Transverse colon (tissue), 4 donors: ENCODE measurements at regions of chr4 and their contacts with region 1.

Region 1: DNA sequence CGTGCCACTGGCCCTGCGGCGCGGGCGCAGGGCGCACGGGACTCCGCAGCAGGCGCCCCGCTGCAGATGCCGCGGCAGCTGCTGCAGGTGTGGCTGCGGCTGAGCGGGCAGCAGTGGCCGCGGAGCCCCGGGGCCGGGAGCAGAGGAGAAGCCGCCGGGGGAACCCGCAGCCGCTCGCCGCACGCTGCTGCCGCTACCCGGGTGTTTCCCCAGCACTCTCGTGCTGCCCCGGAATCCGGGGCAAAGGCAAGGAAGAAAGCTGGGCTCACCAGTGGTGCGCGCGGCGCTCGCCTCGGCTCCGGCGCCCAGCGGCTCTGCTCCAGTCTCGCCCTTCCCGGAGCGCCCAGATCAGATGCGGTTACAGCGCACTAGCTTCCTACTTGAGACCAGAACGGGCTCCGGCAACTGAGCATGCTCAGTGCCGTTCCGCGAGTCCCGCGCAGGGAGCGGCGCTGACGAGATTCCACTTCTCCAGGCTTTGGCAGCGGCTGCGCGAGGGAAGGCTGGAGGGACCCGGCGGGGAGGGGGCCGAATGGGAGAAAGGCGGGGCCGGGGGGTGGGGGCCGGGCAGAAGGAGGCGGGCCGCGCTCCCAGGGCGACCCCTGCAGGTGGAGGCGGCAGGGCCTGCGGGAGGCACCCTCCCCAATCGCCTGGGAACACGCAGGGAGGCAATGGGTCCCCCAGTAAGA is at the start of gene APBB2:
- DNase-seq: peak; percentile 95
- H3K4me3 ChIP-seq: peak within 1 kb of the TSS; percentile 79 to 89 (median 86)
- H3K27ac ChIP-seq: peak within 1 kb of the TSS; percentile 87 to 94 (median 90)
- H3K4me1 ChIP-seq: peaks cover 4 to 51% (median 25%) of the 10 kb centered on the region in 4 donors
- H3K27me3 ChIP-seq: no peaks in the 10 kb centered on the region
- CTCF ChIP-seq: peak; percentile 60 to 87 (median 79)
- EP300 ChIP-seq: no peak
- POLR2A ChIP-seq: peak; percentile 86
- total RNA-seq, gene APBB2: 37.1 to 138 (median 90.1) TPM

Region 2: GRCh38 chr4:40924096-40924792 is 290.0 kb before region 1 on chr4:
- in situ Hi-C with region 1: loop called in 2 of 4 experiments (anchors 10 kb)
- intact Hi-C with region 1: no loop called
- DNase-seq: peak; percentile 63
- H3K4me3 ChIP-seq: no peak overlapping the region
- H3K27ac ChIP-seq: no peak overlapping the region
- H3K4me1 ChIP-seq: peaks cover 0 to 3% (median 0%) of the 10 kb centered on the region in 4 donors
- H3K27me3 ChIP-seq: no peaks in the 10 kb centered on the region
- CTCF ChIP-seq: peak; percentile 69 to 86 (median 83)
- EP300 ChIP-seq: no peak
- POLR2A ChIP-seq: no peak

Region 3: DNA sequence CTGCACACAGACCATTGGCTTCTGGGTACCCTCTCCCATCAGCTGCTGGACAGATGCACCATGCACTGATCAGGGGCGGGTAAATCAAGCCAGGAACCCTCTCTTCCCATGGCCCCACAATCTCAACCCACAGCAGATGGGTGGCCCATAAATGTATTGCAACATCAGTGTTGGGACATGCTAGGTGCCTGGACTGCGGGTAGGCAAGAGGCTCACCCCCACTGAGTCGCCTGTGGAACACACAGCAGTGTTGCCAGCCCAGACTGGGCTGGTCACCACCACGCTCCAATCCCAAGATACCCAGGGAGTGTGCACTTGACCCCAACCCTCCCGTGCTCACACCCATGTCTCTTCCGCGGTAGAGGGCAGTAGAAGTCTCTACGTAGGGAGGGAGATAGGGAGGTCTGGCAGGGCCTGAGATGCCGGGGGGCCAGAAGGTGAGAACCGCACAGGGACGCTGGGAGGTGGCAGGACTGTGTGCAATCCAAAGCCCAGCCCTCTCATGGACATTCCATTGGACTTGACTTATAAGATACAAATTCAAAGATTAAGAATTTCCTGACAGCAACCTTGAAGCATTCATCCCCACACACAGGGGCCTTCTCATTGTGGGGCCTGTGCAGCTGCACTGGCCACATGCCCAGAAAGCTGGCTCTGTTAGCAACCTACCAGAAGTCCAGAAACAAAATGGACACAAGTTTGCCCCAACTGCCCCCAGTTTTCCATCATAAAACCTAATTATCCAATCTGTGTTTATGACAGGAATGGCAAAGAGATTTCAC is 280.8 kb before region 1 on chr4:
- in situ Hi-C with region 1: loop called in 3 of 4 experiments (anchors 5 to 10 kb)
- intact Hi-C with region 1: loop called (anchors 2 kb)
- DNase-seq: no peak
- H3K4me3 ChIP-seq: no peak overlapping the region
- H3K27ac ChIP-seq: no peak overlapping the region
- H3K4me1 ChIP-seq: no peaks in the 10 kb centered on the region
- H3K27me3 ChIP-seq: no peaks in the 10 kb centered on the region
- CTCF ChIP-seq: no peak
- EP300 ChIP-seq: no peak
- POLR2A ChIP-seq: no peak

Region 4: DNA sequence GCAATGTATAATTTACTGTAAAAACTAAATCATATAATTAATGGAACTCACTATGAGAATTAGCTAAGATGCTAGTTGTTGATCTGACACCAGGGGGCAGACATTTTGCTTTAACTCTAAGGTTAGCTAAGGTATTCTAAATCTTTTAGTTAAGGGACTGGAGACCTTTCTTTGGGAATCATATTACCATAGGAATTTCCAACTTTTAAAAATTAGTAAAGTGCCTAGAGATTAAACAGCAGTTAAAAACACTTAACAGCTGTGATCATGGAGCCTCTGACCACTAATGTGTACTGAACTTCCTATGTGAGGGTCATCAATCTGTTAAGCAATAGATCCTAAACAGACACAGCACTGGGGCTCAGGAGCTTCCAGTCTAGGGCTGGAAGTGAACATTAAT is 237.9 kb before region 1 on chr4:
- in situ Hi-C with region 1: loop called (anchors 5 to 25 kb)
- intact Hi-C with region 1: loop called (anchors 2 kb)
- DNase-seq: peak; percentile 25
- H3K4me3 ChIP-seq: no peak overlapping the region
- H3K27ac ChIP-seq: no peak overlapping the region
- H3K4me1 ChIP-seq: no peaks in the 10 kb centered on the region
- H3K27me3 ChIP-seq: no peaks in the 10 kb centered on the region
- CTCF ChIP-seq: peak; percentile 63 to 76 (median 71)
- EP300 ChIP-seq: no peak
- POLR2A ChIP-seq: no peak

Region 5: GRCh38 chr4:41060352-41061334 is 153.6 kb before region 1 on chr4:
- in situ Hi-C with region 1: no loop called
- intact Hi-C with region 1: loop called (anchors 1 kb)
- DNase-seq: peak; percentile 24
- H3K4me3 ChIP-seq: no peak overlapping the region
- H3K27ac ChIP-seq: peak overlapping the region; percentile 46 to 76 (median 57)
- H3K4me1 ChIP-seq: peaks cover 0 to 17% (median 9%) of the 10 kb centered on the region in 4 donors
- H3K27me3 ChIP-seq: no peaks in the 10 kb centered on the region
- CTCF ChIP-seq: no peak
- EP300 ChIP-seq: peak; percentile 86
- POLR2A ChIP-seq: no peak

Region 6: GRCh38 chr4:41120297-41121217 is 93.7 kb before region 1 on chr4:
- in situ Hi-C with region 1: no loop called
- intact Hi-C with region 1: loop called (anchors 10 kb)
- DNase-seq: peak; percentile 45
- H3K4me3 ChIP-seq: no peak overlapping the region
- H3K27ac ChIP-seq: peak overlapping the region; percentile 35 to 70 (median 50)
- H3K4me1 ChIP-seq: peaks cover 4 to 48% (median 21%) of the 10 kb centered on the region in 4 donors
- H3K27me3 ChIP-seq: no peaks in the 10 kb centered on the region
- CTCF ChIP-seq: no peak
- EP300 ChIP-seq: no peak
- POLR2A ChIP-seq: no peak

Region 7: DNA sequence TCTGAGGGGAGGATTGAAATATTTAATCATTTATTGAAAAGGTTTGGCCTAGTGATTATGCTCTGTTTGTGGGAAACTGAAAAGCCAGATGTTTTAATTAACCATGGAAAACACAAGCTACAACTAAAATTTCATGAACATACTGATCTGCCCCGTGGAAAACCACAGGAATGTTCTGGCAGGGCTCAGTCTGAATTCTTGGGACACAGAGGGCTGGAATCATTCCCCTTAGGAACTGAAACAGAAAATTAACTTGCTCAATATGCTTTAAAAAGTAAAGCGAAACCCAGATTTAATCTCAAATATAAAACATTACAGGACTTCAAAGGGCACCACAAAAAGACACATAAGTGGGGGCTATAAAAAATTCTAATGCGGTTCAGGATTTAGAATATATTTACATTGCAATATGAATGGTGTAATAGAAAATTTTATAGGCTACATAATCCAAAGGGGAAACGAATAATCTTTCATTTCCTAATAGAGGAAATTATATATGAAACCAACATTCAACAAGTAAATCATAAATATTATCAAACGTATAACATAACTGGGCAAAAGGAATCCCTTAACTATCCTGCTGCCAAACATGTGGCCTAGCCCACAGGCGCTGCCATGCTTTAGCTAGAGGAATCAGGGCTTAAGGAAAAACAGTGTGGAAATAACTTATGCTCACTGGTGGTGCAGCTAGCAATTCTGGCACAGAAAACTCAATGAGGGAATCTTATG is 70.8 kb before region 1 on chr4:
- in situ Hi-C with region 1: no loop called
- intact Hi-C with region 1: loop called (anchors 5 kb)
- DNase-seq: peak; percentile 39
- H3K4me3 ChIP-seq: no peak overlapping the region
- H3K27ac ChIP-seq: peak overlapping the region; percentile 81 to 89 (median 82)
- H3K4me1 ChIP-seq: peaks cover 18 to 48% (median 36%) of the 10 kb centered on the region in 4 donors
- H3K27me3 ChIP-seq: no peaks in the 10 kb centered on the region
- CTCF ChIP-seq: no peak
- EP300 ChIP-seq: no peak
- POLR2A ChIP-seq: no peak